T-cell (primary cell): ENCODE measurements at regions of chr6 and their contacts with region 1.

Region 1: DNA sequence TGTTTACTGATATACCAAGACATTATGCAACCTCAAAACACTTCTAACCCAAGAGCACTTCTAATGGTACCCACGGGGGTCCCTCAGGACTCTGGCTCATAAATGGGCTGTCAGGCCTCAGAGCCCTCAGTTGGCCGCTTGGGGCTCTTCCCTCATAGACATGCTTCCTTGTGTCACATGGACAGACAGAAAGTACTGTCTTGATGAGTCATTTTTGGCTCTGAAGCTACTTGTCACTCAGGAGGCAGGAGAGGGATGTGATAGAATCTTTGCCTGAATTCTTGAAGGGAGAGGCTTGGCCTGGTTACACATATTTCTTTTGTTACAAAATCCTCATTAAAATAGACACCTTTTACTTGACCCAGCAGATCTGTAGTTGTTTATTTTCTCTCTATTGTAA is 15.1 kb upstream of the EDN1 start:
- DNase-seq: no peak
- ATAC-seq: no peak
- H3K4me3 ChIP-seq: no peak overlapping the region
- H3K4me3 Mint-ChIP-seq: no peak overlapping the region
- H3K27ac ChIP-seq: no peak overlapping the region
- H3K27ac Mint-ChIP-seq: no peak overlapping the region
- H3K4me1 ChIP-seq: no peaks in the 10 kb centered on the region
- H3K4me1 Mint-ChIP-seq: peaks cover 7 to 13% (median 12%) of the 10 kb centered on the region in 3 donors
- H3K27me3 ChIP-seq: no peaks in the 10 kb centered on the region
- H3K27me3 Mint-ChIP-seq: peaks cover 5 to 9% of the 10 kb centered on the region in 2 donors

Region 2: GRCh38 chr6:11585426-11586016 is 689.6 kb before region 1 on chr6:
- CTCF ChIA-PET with region 1: no interaction called
- POLR2A ChIA-PET with region 1: interaction called in 1 of 2 experiments, 12 read pairs
- DNase-seq: peak in 1 of 35 experiments; percentile 41
- ATAC-seq: no peak
- H3K4me3 ChIP-seq: no peak overlapping the region
- H3K4me3 Mint-ChIP-seq: no peak overlapping the region
- H3K27ac ChIP-seq: no peak overlapping the region
- H3K27ac Mint-ChIP-seq: no peak overlapping the region
- H3K4me1 ChIP-seq: no peaks in the 10 kb centered on the region
- H3K4me1 Mint-ChIP-seq: no peaks in the 10 kb centered on the region
- H3K27me3 ChIP-seq: no peaks in the 10 kb centered on the region
- H3K27me3 Mint-ChIP-seq: peaks cover under 1 to 8% of the 10 kb centered on the region in 2 donors

Region 3: GRCh38 chr6:12241493-12242175 is 33.5 kb before region 1 on chr6:
- CTCF ChIA-PET with region 1: no interaction called
- POLR2A ChIA-PET with region 1: no interaction called
- DNase-seq: no peak
- ATAC-seq: no peak
- H3K4me3 ChIP-seq: no peak overlapping the region
- H3K4me3 Mint-ChIP-seq: no peak overlapping the region
- H3K27ac ChIP-seq: no peak overlapping the region
- H3K27ac Mint-ChIP-seq: no peak overlapping the region
- H3K4me1 ChIP-seq: no peaks in the 10 kb centered on the region
- H3K4me1 Mint-ChIP-seq: no peaks in the 10 kb centered on the region
- H3K27me3 ChIP-seq: no peaks in the 10 kb centered on the region
- H3K27me3 Mint-ChIP-seq: peaks cover 3% of the 10 kb centered on the region in 2 donors

Region 4: GRCh38 chr6:12289933-12290820 is 15.1 kb after region 1 on chr6 and contains the start of gene EDN1:
- CTCF ChIA-PET with region 1: interaction called in 1 of 2 experiments, 10 read pairs
- POLR2A ChIA-PET with region 1: no interaction called
- DNase-seq: peak in 30 of 35 experiments; percentile 5 to 56 (median 30)
- ATAC-seq: peak; percentile 76 to 90 (median 80)
- H3K4me3 ChIP-seq: peak within 1 kb of the TSS; percentile 29 to 67
- H3K4me3 Mint-ChIP-seq: peak within 1 kb of the TSS; percentile 84 to 88 (median 85)
- H3K27ac ChIP-seq: no peak within 1 kb of the TSS
- H3K27ac Mint-ChIP-seq: no peak within 1 kb of the TSS
- H3K4me1 ChIP-seq: peaks cover 0 to 11% of the 10 kb centered on the region in 2 experiments
- H3K4me1 Mint-ChIP-seq: peaks cover 13 to 19% (median 16%) of the 10 kb centered on the region in 3 donors
- H3K27me3 ChIP-seq: peaks cover 5 to 41% of the 10 kb centered on the region in 2 experiments
- H3K27me3 Mint-ChIP-seq: peaks cover 25 to 43% of the 10 kb centered on the region in 2 donors
- total RNA-seq, gene EDN1: 0.44 to 1.2 (median 0.79) TPM

Region 5: DNA sequence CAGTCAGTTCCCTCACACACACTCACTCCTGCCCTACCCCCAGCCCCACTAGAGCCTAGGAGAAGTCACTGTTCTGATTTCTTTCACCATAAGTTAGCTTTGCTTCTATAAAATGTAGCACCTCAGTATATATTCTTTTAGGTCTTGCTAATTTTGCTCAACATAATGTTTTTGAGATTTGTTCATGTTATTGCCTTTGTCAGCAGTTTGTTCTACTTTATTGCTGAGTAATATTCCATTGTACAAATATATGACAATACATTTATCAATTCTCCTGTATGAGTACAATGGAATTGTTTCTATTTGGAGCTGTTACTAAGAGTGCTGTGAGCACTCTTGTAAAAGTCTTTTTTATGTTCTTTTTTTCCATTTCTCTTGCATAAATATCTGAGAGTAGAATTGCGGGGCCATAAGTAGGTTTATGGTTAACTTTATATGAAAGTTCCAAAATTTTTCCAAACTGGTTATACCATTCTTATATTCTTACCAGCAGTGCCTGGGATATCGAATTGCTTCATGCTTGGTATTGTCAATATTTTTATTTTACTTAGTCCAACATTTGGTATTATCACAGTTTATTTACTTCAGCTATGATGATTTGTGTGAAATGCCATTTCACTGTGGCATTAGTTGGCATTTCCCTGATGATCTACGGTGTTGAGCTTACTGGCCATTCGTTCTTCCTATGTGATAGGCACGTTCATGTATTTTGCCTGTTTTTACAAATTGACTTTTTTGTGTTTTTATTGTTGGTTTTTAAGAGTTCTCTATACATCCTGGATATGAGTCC is 40.4 kb after region 1 on chr6:
- CTCF ChIA-PET with region 1: no interaction called
- POLR2A ChIA-PET with region 1: no interaction called
- DNase-seq: no peak
- ATAC-seq: no peak
- H3K4me3 ChIP-seq: no peak overlapping the region
- H3K4me3 Mint-ChIP-seq: no peak overlapping the region
- H3K27ac ChIP-seq: no peak overlapping the region
- H3K27ac Mint-ChIP-seq: no peak overlapping the region
- H3K4me1 ChIP-seq: no peaks in the 10 kb centered on the region
- H3K4me1 Mint-ChIP-seq: no peaks in the 10 kb centered on the region
- H3K27me3 ChIP-seq: peaks cover 0 to 4% of the 10 kb centered on the region in 2 experiments
- H3K27me3 Mint-ChIP-seq: peaks cover 5 to 14% of the 10 kb centered on the region in 2 donors